Heart left ventricle (tissue), 16 donors: ENCODE measurements at regions of chr1 and their contacts with region 1.

Region 1: DNA sequence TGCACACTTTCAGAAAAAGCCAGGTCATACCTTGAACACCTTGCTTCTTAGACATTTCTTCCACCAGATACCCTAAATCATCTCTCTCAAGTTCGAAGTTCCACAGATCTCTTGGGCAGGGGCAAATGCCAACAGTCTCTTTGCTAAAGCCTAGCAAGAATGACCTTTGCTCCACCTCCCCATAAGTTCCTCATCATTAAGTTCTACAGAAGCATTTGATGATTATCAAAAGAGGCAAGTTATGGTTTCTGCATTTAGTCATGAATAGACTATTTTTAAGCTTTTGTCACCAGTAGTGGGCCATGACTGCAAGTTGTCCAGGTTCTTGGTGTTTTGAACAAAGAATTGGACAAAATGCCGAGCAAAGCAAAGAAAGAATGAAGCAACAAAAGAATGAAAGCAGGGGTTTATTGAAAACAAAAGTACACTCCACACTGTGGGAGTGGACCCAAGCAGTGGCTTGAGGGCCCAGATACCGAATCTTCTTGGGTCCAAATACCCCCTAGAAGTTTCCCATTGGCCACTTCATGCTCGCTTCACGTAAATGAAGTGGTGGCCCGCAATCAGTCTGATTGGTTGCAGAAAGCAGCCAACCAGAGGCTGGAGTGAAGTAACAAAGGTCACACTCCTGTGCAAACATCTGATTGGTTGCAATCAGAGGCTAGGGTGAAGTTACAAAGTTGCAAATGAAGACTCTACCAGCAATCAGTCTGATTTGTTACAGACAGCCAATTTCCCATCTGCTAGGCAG is 9.8 kb upstream of the EGLN1 start:
- DNase-seq: no peak
- ATAC-seq: no peak
- H3K4me3 ChIP-seq: no peak overlapping the region
- H3K27ac ChIP-seq: no peak overlapping the region
- H3K4me1 ChIP-seq: peaks cover 0 to 11% (median 0%) of the 10 kb centered on the region in 12 donors
- H3K27me3 ChIP-seq: no peaks in the 10 kb centered on the region
- CTCF ChIP-seq: no peak
- POLR2A ChIP-seq: no peak

Region 2: DNA sequence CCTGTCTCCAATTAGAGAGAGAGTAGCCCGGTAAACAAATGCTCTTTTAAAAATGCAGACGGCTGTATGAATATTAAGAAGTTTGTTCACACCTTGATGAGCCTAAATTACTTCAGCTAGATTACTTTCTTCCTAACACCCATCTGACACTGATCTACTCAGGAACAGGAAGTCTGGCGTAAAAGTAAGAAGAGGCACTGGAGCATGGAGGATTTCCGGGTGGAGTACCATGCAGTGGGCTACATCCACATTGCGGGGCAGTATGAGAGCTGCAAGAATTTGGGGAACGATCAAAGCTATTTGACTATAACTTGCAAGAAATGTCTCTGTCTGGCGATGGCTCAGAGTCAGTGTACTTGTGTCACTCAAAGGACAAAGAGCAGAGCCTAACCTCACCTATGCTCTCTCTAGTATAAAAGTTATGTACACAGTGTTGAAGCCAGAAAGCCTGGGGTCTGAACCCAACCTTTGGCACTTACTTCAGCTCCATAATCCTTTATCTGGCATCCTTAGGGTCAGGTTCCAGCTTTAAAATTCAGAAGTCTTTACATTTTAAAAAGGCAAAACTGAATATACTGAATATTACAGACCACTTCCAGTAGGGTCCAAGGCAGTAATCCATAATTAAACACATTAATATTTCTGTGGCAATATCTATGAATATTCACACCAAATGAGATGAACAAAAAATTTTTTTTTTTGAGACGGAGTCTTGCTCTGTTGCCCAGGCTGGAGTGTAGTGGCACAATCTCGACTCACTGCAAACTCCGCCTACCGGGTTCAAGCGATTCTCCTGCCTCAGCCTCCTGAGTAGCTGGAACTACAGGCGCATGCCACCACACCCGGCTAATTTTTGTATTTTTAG is 198.7 kb before region 1 on chr1:
- intact Hi-C with region 1: no loop called
- DNase-seq: no peak
- ATAC-seq: no peak
- H3K4me3 ChIP-seq: no peak overlapping the region
- H3K27ac ChIP-seq: no peak overlapping the region
- H3K4me1 ChIP-seq: peaks cover 0 to 14% (median 6%) of the 10 kb centered on the region in 12 donors
- H3K27me3 ChIP-seq: no peaks in the 10 kb centered on the region
- CTCF ChIP-seq: no peak
- POLR2A ChIP-seq: no peak

Region 3: DNA sequence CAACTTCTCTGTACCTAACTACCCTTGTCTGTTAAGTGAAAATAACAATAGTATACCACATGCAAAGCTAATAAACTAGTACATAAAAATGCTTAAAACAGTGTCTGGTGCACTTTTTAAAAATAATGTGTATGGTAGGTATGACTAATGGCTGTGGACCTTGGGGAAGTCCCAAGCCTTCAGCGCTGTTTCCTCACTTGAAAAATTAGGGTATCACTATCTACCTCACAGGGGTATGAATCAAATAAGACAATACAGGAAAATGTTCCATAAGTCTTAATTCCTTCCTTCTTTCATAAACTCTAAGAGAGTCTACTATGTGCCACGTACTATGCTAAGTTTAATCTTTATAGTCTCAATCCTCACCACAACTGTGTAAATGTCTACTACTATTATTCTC is 41.8 kb before region 1 on chr1:
- intact Hi-C with region 1: no loop called
- DNase-seq: no peak
- ATAC-seq: no peak
- H3K4me3 ChIP-seq: no peak overlapping the region
- H3K27ac ChIP-seq: peak overlapping the region in 1 of 12 donors; percentile 3
- H3K4me1 ChIP-seq: peaks cover 0 to 72% (median 44%) of the 10 kb centered on the region in 12 donors
- H3K27me3 ChIP-seq: no peaks in the 10 kb centered on the region
- CTCF ChIP-seq: no peak
- POLR2A ChIP-seq: no peak

Region 4: GRCh38 chr1:231487019-231487418 is 55.2 kb after region 1 on chr1:
- intact Hi-C with region 1: loop called in 1 of 10 experiments (anchors 10 kb)
- DNase-seq: no peak
- ATAC-seq: no peak
- H3K4me3 ChIP-seq: no peak overlapping the region
- H3K27ac ChIP-seq: no peak overlapping the region
- H3K4me1 ChIP-seq: no peaks in the 10 kb centered on the region
- H3K27me3 ChIP-seq: no peaks in the 10 kb centered on the region
- CTCF ChIP-seq: no peak
- POLR2A ChIP-seq: no peak

Region 5: DNA sequence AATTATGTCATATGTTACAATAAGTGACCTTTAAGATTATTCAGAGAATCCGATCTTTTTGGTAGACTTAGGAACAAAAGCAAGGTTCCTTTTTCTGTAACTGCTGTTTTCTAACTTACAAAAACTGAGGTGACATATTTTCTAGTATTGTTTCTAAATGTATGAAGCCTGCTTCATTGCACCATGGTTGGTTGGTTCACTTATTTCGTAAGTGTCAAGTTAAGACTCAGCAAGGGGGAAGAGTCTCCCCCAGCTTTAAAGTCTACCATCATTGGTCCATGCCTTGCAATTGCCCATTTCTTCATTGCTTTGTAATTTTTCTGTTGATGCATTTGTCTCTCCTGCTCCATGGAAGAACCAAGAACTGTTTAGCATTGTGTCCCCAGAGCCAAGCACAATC is 331.6 kb after region 1 on chr1:
- intact Hi-C with region 1: no loop called
- DNase-seq: no peak
- ATAC-seq: no peak
- H3K4me3 ChIP-seq: no peak overlapping the region
- H3K27ac ChIP-seq: no peak overlapping the region
- H3K4me1 ChIP-seq: no peaks in the 10 kb centered on the region
- H3K27me3 ChIP-seq: no peaks in the 10 kb centered on the region
- CTCF ChIP-seq: no peak
- POLR2A ChIP-seq: no peak